ENCODE measurements at regions of chr13 and their contacts with region 1.

Region 1: DNA sequence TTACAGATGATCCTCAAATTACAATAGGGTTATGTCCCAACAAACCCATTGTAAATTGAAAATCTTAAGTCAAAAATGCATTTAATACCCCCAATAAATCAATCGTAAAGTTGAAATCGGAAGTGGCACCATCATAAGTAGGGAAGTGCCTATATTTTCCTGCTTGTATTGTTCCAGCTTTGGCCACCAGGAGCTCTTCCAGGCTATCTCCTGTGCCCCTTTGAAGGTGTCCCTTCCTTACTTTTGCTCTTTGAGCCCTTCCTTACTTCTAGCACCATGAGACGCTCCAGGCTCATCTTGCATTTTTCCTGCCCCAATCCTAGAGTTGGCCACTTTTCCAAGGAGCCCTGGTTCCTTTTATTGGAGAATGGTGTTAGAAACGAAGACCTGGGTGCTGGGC is 163.0 kb upstream of the TSC22D1 start:
- DNase-seq: no peak
- ATAC-seq: no peak
- H3K4me3 ChIP-seq: no peak overlapping the region
- H3K27ac ChIP-seq: no peak overlapping the region
- H3K4me1 ChIP-seq: no peaks in the 10 kb centered on the region
- H3K27me3 ChIP-seq: no peaks in the 10 kb centered on the region; a peak in 1 of 5 replicates
- CTCF ChIP-seq: no peak
- EP300 ChIP-seq: no peak
- POLR2A ChIP-seq: no peak
- RAD21 ChIP-seq: no peak

Region 2: DNA sequence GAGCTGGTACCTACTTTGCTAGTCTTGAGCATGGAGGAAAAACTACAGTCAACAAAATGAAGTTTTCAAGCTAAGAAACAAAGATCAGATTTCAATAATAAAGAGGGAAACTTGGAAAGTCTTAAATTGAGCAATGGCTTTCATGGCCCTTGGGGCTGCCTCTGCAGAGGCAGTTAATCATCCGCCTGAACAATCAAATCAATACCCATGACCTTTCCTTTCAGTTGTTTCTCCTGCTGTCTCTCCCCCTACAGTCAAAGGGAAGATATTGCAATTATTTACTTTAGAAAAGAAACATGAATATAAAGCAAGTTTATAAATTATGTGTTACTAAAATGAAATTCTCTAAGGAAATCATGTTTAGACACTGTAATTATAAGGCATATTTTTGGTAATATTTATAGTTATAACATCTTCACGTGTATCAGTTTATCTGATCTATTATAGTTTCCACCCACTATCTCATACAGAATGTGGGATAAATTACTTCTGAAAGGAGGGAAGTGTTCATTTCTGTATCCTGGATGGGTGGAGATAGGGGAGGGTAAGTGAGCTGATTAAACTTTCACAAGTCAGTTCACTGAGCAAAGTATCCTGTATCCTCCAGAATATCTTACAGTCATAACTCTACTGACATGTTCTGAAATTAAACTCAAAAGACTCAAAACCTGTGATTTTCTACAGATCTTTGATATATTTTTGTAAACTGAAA is 90.6 kb before region 1 on chr13:
- CTCF ChIA-PET with region 1: no interaction called
- POLR2A ChIA-PET with region 1: no interaction called
- in situ Hi-C with region 1: no loop called
- intact Hi-C with region 1: loop called (anchors 2 kb)
- DNase-seq: peak; percentile 45
- ATAC-seq: peak; percentile 93
- H3K4me3 ChIP-seq: no peak overlapping the region
- H3K27ac ChIP-seq: no peak overlapping the region
- H3K4me1 ChIP-seq: 0 out of 2 replicates have a peak, but pooled peaks cover 6% of the 10 kb centered on the region
- H3K27me3 ChIP-seq: no peaks in the 10 kb centered on the region
- CTCF ChIP-seq: peak; percentile 41
- EP300 ChIP-seq: no peak
- POLR2A ChIP-seq: no peak
- RAD21 ChIP-seq: 0 out of 2 replicates have a peak, but pooled peaks have one; percentile 31

Region 3: GRCh38 chr13:44790289-44790688 is 51.2 kb after region 1 on chr13:
- CTCF ChIA-PET with region 1: no interaction called
- POLR2A ChIA-PET with region 1: no interaction called
- in situ Hi-C with region 1: no loop called
- intact Hi-C with region 1: no loop called
- DNase-seq: no peak
- ATAC-seq: peak; percentile 54
- H3K4me3 ChIP-seq: no peak overlapping the region
- H3K27ac ChIP-seq: no peak overlapping the region
- H3K4me1 ChIP-seq: no peaks in the 10 kb centered on the region
- H3K27me3 ChIP-seq: 0 out of 5 replicates have a peak, but pooled peaks cover 0 to 3% of the 10 kb centered on the region in 2 experiments
- CTCF ChIP-seq: no peak
- EP300 ChIP-seq: no peak
- POLR2A ChIP-seq: no peak
- RAD21 ChIP-seq: no peak

Measured in HepG2 (cell line).